Caco-2 (cell line): ENCODE measurements at regions of chr4 and their contacts with region 1.

Region 1: GRCh38 chr4:64539234-64539849 is 130.1 kb upstream of the TECRL start:
- DNase-seq: peak; percentile 56
- H3K4me3 ChIP-seq: no peak overlapping the region
- H3K4me3 Mint-ChIP-seq: no peak overlapping the region
- H3K27ac Mint-ChIP-seq: no peak overlapping the region
- H3K4me1 ChIP-seq: no peaks in the 10 kb centered on the region
- H3K4me1 Mint-ChIP-seq: no peaks in the 10 kb centered on the region
- H3K27me3 ChIP-seq: no peaks in the 10 kb centered on the region
- H3K27me3 Mint-ChIP-seq: no peaks in the 10 kb centered on the region
- CTCF ChIP-seq: peak; percentile 59 to 66

Region 2: GRCh38 chr4:63296773-63297172 is 1242.6 kb before region 1 on chr4:
- CTCF ChIA-PET with region 1: no interaction called
- POLR2A ChIA-PET with region 1: no interaction called
- intact Hi-C with region 1: loop called (anchors 2 kb)
- DNase-seq: peak in 1 of 2 experiments; percentile 5
- H3K4me3 ChIP-seq: no peak overlapping the region
- H3K4me3 Mint-ChIP-seq: no peak overlapping the region
- H3K27ac Mint-ChIP-seq: no peak overlapping the region
- H3K4me1 ChIP-seq: no peaks in the 10 kb centered on the region
- H3K4me1 Mint-ChIP-seq: no peaks in the 10 kb centered on the region
- H3K27me3 ChIP-seq: no peaks in the 10 kb centered on the region
- H3K27me3 Mint-ChIP-seq: no peaks in the 10 kb centered on the region
- CTCF ChIP-seq: peak in 1 of 2 experiments; percentile 18

Region 3: GRCh38 chr4:63528256-63528991 is 1010.9 kb before region 1 on chr4:
- CTCF ChIA-PET with region 1: no interaction called
- POLR2A ChIA-PET with region 1: no interaction called
- intact Hi-C with region 1: loop called (anchors 1 kb)
- DNase-seq: no peak
- H3K4me3 ChIP-seq: no peak overlapping the region
- H3K4me3 Mint-ChIP-seq: no peak overlapping the region
- H3K27ac Mint-ChIP-seq: no peak overlapping the region
- H3K4me1 ChIP-seq: no peaks in the 10 kb centered on the region
- H3K4me1 Mint-ChIP-seq: no peaks in the 10 kb centered on the region
- H3K27me3 ChIP-seq: no peaks in the 10 kb centered on the region
- H3K27me3 Mint-ChIP-seq: no peaks in the 10 kb centered on the region
- CTCF ChIP-seq: no peak

Region 4: DNA sequence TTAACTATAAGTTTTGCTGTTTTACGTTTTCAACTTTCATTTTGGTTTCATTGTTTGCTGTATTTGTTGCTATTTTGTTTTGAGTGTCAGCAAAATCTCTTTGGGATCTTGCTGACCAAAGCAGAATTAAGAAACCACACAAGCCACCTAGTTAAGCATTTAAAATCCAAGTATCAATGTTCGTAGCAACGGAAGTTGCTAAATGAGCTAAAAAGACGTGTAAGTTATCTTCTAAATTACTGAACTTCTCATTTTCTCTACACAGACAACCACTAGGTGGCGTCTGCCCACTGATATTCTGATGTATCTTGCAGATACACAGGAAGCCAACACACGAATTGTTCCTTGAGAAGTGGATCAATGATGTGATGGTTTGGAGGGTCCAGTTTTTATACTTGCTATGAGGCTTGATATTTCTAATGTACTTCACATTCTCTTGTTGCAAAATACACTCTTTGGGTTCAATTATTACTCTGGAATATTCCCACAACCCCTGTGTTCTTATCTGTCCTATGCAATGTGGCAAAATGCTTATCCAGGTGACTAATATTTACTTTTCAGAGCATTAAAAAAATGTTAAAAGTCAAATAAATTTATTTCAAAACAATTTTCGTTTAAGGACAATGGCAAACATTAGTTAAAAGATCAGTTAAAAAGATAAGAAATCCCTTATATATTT is 380.6 kb before region 1 on chr4:
- CTCF ChIA-PET with region 1: interaction called, 4 read pairs
- POLR2A ChIA-PET with region 1: no interaction called
- intact Hi-C with region 1: loop called (anchors 1 kb)
- DNase-seq: peak; percentile 53 to 56
- H3K4me3 ChIP-seq: no peak overlapping the region
- H3K4me3 Mint-ChIP-seq: no peak overlapping the region
- H3K27ac Mint-ChIP-seq: no peak overlapping the region
- H3K4me1 ChIP-seq: no peaks in the 10 kb centered on the region
- H3K4me1 Mint-ChIP-seq: no peaks in the 10 kb centered on the region
- H3K27me3 ChIP-seq: no peaks in the 10 kb centered on the region
- H3K27me3 Mint-ChIP-seq: no peaks in the 10 kb centered on the region
- CTCF ChIP-seq: peak; percentile 70 to 75

Region 5: DNA sequence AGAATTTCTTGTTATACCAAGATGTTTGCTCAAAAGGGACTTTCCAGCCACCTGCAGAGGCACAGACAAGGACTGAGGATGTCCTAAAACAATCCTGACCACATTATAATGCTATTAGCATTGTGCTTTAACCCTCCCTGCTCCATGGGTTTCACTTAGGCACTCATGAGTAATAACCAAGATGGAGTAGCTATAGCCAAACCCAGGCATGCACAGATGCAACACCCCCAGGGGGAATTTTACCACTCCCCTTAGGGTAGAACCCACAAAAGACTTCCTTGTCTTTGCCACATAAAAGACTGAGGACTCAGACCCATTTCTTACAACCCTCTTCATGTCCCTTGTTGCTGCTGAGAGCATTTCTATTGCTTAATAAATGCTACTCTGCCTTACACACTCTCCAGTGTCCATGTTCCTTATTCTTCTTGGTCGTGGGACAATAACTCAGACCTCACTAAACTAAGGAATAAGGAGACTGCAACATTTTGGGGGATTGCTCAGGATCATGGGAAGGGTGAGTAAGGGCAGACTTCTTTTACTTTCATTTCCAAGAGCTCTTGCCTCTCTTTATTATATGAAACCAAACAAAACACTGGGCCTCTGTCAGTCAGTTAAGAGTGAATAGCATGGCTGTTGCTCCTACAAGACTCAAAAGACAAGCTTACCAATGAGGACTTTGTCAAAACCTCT is 233.6 kb before region 1 on chr4:
- CTCF ChIA-PET with region 1: no interaction called
- POLR2A ChIA-PET with region 1: no interaction called
- intact Hi-C with region 1: no loop called
- DNase-seq: no peak
- H3K4me3 ChIP-seq: no peak overlapping the region
- H3K4me3 Mint-ChIP-seq: no peak overlapping the region
- H3K27ac Mint-ChIP-seq: no peak overlapping the region
- H3K4me1 ChIP-seq: no peaks in the 10 kb centered on the region
- H3K4me1 Mint-ChIP-seq: no peaks in the 10 kb centered on the region
- H3K27me3 ChIP-seq: no peaks in the 10 kb centered on the region
- H3K27me3 Mint-ChIP-seq: no peaks in the 10 kb centered on the region
- CTCF ChIP-seq: no peak

Region 6: DNA sequence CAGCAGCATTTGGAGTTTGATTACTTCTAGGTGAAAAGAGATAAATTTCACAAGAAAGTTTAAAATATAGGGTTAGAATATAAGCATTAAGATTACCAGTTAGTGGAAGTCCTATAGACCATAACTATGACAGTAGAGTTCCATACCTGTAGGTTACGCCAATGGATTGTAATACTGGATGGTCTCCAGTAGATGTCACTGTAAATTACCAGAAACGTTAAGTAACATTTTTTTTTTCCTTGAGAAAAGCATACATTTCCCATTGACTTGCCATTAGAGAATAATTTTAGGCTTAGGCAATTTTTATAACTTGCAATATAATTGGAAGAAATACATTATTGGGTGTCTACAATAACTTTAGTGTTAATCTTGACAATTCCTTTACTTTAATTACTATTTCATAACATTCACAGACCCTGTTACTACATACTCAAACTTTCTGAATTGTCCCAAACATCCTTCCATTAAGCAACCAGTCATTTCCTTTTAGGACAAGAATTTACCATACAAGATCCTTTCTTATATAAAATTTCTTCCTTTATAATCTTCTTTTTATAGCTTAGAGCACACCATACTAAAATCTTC is 174.0 kb after region 1 on chr4:
- CTCF ChIA-PET with region 1: no interaction called
- POLR2A ChIA-PET with region 1: no interaction called
- intact Hi-C with region 1: no loop called
- DNase-seq: peak in 1 of 2 experiments; percentile 9
- H3K4me3 ChIP-seq: no peak overlapping the region
- H3K4me3 Mint-ChIP-seq: no peak overlapping the region
- H3K27ac Mint-ChIP-seq: no peak overlapping the region
- H3K4me1 ChIP-seq: no peaks in the 10 kb centered on the region
- H3K4me1 Mint-ChIP-seq: no peaks in the 10 kb centered on the region
- H3K27me3 ChIP-seq: no peaks in the 10 kb centered on the region
- H3K27me3 Mint-ChIP-seq: no peaks in the 10 kb centered on the region
- CTCF ChIP-seq: peak; percentile 29 to 59

Region 7: GRCh38 chr4:64727960-64728359 is 188.6 kb after region 1 on chr4:
- CTCF ChIA-PET with region 1: no interaction called
- POLR2A ChIA-PET with region 1: no interaction called
- intact Hi-C with region 1: no loop called
- DNase-seq: no peak
- H3K4me3 ChIP-seq: no peak overlapping the region
- H3K4me3 Mint-ChIP-seq: no peak overlapping the region
- H3K27ac Mint-ChIP-seq: no peak overlapping the region
- H3K4me1 ChIP-seq: no peaks in the 10 kb centered on the region
- H3K4me1 Mint-ChIP-seq: no peaks in the 10 kb centered on the region
- H3K27me3 ChIP-seq: no peaks in the 10 kb centered on the region
- H3K27me3 Mint-ChIP-seq: no peaks in the 10 kb centered on the region
- CTCF ChIP-seq: no peak

Region 8: GRCh38 chr4:64781737-64782326 is 242.5 kb after region 1 on chr4:
- CTCF ChIA-PET with region 1: no interaction called
- POLR2A ChIA-PET with region 1: no interaction called
- intact Hi-C with region 1: no loop called
- DNase-seq: peak in 1 of 2 experiments; percentile 28
- H3K4me3 ChIP-seq: no peak overlapping the region
- H3K4me3 Mint-ChIP-seq: no peak overlapping the region
- H3K27ac Mint-ChIP-seq: no peak overlapping the region
- H3K4me1 ChIP-seq: no peaks in the 10 kb centered on the region
- H3K4me1 Mint-ChIP-seq: no peaks in the 10 kb centered on the region
- H3K27me3 ChIP-seq: no peaks in the 10 kb centered on the region
- H3K27me3 Mint-ChIP-seq: no peaks in the 10 kb centered on the region
- CTCF ChIP-seq: peak; percentile 51 to 61